Activated CD8-positive, alpha-beta T cell treated with anti-CD3 and anti-CD28 coated beads, Interleukin-2, amount 10 ng/mL, durations not matched to agents 7 days and 5 days (primary cell): ENCODE measurements at regions of chr7 and their contacts with region 1.

Region 1: DNA sequence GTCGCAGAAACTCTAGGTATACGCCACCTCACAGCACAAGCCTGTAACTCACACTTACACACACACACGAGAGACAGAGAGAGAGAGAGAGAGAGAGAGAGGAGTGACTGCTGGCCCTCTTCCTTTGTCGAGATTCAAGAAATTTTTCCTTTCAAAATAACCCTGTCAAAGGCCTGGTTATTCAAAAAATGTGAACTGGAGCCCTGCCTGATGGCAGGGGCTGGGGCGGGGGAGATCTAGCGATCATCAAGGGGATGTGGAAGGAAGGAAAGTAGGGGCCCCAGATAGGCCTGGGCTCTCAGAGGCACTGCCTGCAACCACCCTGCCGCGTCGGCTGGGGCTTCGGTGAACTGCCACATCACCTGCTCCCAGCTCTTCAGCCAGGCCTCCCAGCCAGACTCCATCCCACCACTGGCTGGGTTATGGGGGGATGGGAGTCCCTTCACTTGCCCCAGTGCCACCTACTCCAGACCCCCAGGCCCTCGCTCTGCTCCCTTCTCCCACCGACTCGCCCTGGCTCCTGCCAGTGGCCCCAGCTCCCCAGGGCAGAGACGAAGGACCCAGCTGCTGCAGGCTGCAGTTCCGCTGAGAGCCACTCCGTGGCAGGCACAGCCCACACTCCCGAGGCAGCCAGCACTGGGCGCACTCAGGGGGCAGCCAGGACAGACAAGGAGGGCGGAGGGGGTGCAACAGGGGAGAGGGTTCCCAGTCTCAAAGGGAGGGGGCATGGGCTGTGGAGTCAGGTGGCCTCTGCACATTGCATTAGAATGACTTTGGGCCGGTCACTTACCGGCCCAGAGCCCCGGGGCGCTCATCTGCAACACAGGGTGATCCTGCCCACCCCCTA is 15.3 kb downstream of the KCNH2 start:
- DNase-seq: peak; percentile 65
- ATAC-seq: peak; percentile 88
- H3K4me3 Mint-ChIP-seq: no peak overlapping the region
- H3K27ac Mint-ChIP-seq: no peak overlapping the region
- H3K4me1 Mint-ChIP-seq: no peaks in the 10 kb centered on the region
- H3K27me3 Mint-ChIP-seq: peaks cover 33% of the 10 kb centered on the region

Region 2: DNA sequence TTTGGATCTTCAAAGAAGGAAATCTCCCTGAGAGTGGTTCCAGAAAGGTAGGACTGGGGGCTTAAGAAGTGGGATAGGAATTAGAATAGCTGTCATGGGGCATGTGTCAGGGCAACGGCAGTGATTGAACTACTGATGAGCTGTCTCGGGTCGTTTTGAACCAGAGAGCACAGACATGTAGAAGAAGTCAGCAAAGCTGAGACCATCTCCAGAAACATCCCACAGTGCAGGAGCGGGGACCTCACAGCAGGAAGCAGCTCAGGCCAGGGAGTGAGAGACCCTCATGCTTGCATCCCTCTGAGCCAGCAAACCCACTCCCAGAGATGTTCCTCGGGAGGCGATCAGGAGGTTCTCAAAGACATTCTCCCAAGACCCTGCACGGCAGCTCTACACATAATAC is 50.3 kb before region 1 on chr7:
- CTCF ChIA-PET with region 1: no interaction called
- POLR2A ChIA-PET with region 1: no interaction called
- DNase-seq: no peak
- ATAC-seq: no peak
- H3K4me3 Mint-ChIP-seq: no peak overlapping the region
- H3K27ac Mint-ChIP-seq: no peak overlapping the region
- H3K4me1 Mint-ChIP-seq: peaks cover 12% of the 10 kb centered on the region
- H3K27me3 Mint-ChIP-seq: peaks cover 48% of the 10 kb centered on the region

Region 3: GRCh38 chr7:150974468-150975391 is 12.0 kb after region 1 on chr7:
- CTCF ChIA-PET with region 1: interaction called, 16 read pairs
- POLR2A ChIA-PET with region 1: no interaction called
- DNase-seq: peak; percentile 77
- ATAC-seq: peak; percentile 82
- H3K4me3 Mint-ChIP-seq: peak overlapping the region; percentile 79
- H3K27ac Mint-ChIP-seq: peak overlapping the region; percentile 67
- H3K4me1 Mint-ChIP-seq: peaks cover 28% of the 10 kb centered on the region
- H3K27me3 Mint-ChIP-seq: peaks cover 31% of the 10 kb centered on the region

Region 4: GRCh38 chr7:150980663-150981062 is 17.9 kb after region 1 on chr7:
- CTCF ChIA-PET with region 1: interaction called, 82 read pairs
- POLR2A ChIA-PET with region 1: no interaction called
- DNase-seq: no peak
- ATAC-seq: no peak
- H3K4me3 Mint-ChIP-seq: no peak overlapping the region
- H3K27ac Mint-ChIP-seq: no peak overlapping the region
- H3K4me1 Mint-ChIP-seq: peaks cover 14% of the 10 kb centered on the region
- H3K27me3 Mint-ChIP-seq: peaks cover 58% of the 10 kb centered on the region

Region 5: DNA sequence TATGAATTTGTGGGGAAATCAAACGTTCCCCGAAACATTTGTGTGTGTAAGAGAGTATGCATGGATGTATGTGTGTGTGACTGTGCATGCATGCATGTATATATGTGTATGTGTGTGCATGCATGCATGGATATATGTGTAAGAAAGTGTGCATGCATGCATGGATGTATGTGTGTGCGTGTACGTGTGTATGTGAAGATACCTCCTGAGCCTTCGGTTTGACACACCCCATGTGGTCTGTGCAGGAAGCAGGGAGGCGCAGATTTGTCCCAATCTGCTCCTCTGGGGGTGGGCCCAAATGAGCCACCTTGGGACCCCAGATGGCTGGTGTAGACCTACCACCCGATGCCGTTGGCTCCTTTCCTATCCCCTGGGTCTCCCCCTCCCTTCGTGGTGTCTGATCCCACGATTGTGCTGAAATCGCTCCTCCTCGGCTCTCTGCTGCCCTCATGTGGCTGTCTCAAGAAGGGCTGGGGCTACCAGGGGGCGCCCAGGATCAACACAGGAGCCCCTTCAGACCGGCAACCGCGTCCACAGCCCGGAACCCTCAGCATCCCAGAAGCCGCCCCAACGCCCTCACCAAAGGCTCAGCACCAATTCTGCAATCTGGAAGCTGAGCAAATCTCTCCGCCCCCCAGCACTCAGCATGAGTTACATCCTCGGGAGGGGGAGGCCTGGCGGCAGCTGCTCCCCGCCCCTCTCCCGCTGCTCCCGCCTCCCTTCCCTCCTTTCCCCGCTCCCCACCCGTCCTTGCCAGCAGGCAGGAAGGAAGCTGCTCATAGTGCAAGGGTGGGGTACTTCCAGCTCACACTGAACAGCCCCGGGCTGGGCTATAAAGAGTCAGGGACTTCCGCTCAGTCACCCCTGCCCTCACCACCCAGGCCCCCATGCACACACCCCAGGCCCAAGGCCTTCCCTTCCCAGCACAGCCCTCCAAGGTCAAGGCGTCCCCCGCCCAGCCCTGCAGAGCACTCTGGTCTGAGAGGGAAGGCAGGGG is 25.8 kb after region 1 on chr7:
- CTCF ChIA-PET with region 1: interaction called, 82 read pairs
- POLR2A ChIA-PET with region 1: no interaction called
- DNase-seq: peak; percentile 75
- ATAC-seq: peak; percentile 73
- H3K4me3 Mint-ChIP-seq: no peak overlapping the region
- H3K27ac Mint-ChIP-seq: no peak overlapping the region
- H3K4me1 Mint-ChIP-seq: peaks cover 16% of the 10 kb centered on the region
- H3K27me3 Mint-ChIP-seq: peaks cover 25% of the 10 kb centered on the region

Region 6: DNA sequence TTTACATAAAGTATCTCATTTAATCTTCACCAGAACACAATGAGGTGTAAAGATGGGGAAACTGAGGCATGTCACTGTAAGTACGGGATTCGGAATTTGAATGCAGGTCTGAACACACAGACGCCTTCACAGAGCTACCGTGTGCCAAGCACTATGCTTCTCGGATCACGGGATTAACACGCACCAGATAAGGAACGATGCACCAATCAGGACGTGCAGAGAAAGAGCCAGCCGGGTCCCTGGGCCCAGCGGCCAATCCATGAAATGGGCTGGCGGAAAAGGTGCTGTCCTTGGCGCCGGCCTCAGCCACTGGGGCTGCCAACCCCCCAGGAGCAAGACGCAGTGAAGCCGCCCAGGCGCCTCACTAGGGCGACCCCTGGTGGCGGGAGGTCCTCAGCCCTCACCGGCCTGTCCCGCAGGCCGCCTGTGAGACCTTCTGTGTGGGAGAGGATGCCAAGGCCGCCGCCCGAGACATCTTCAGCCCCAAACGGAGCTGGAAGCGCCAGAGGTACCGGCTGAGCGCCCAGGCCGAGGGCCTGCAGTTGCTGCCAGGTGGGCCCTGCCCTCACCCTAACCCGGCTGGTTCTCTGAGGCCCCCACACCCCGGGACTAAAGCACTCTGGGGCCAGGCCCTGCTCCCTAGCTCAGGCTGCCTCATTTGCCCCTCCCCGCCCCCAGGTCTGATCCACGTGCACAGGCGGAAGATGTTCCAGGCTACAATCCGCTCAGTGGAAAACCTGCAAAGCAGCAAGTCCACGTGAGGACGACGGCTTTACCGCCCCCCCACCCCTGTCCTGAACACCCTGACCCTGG is 45.9 kb after region 1 on chr7:
- CTCF ChIA-PET with region 1: interaction called, 14 read pairs
- POLR2A ChIA-PET with region 1: no interaction called
- DNase-seq: peak; percentile 83
- ATAC-seq: peak; percentile 62
- H3K4me3 Mint-ChIP-seq: peak overlapping the region; percentile 76
- H3K27ac Mint-ChIP-seq: peak overlapping the region; percentile 83
- H3K4me1 Mint-ChIP-seq: peaks cover 62% of the 10 kb centered on the region
- H3K27me3 Mint-ChIP-seq: no peaks in the 10 kb centered on the region

Region 7: DNA sequence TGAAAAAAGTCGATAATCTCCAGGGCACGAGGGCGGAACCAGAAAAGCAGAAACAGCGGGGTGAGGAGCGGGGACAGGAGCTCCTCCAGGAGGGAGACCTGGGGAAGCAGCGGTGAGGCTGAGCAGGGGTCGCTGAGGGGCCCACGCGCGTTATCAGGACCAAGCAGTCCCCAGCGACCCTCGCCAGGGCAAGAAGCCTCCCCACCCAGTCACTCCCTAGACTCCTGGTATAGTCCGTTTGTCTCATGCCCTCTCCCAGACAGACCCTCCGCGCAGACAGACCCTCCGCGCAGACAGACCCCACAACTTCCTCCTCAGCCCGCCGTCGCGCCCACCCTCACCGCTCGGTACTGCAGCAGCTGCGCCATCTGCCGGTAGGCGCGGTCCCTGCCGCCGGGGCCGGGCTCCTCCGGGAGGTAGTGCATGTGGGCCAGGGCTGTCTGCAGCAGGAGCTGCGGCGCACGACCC is 55.2 kb after region 1 on chr7:
- CTCF ChIA-PET with region 1: interaction called, 29 read pairs
- POLR2A ChIA-PET with region 1: no interaction called
- DNase-seq: peak; percentile 83
- ATAC-seq: peak; percentile 62
- H3K4me3 Mint-ChIP-seq: peak overlapping the region; percentile 69
- H3K27ac Mint-ChIP-seq: peak overlapping the region; percentile 65
- H3K4me1 Mint-ChIP-seq: peaks cover 59% of the 10 kb centered on the region
- H3K27me3 Mint-ChIP-seq: peaks cover 28% of the 10 kb centered on the region

Region 8: GRCh38 chr7:151110941-151111645 is 148.3 kb after region 1 on chr7:
- CTCF ChIA-PET with region 1: interaction called, 27 read pairs
- POLR2A ChIA-PET with region 1: no interaction called
- DNase-seq: peak; percentile 83
- ATAC-seq: peak; percentile 84
- H3K4me3 Mint-ChIP-seq: no peak overlapping the region
- H3K27ac Mint-ChIP-seq: no peak overlapping the region
- H3K4me1 Mint-ChIP-seq: peaks cover 8% of the 10 kb centered on the region
- H3K27me3 Mint-ChIP-seq: peaks cover 20% of the 10 kb centered on the region